ENCODE measurements at regions of chr4 and their contacts with region 1.

Region 1: DNA sequence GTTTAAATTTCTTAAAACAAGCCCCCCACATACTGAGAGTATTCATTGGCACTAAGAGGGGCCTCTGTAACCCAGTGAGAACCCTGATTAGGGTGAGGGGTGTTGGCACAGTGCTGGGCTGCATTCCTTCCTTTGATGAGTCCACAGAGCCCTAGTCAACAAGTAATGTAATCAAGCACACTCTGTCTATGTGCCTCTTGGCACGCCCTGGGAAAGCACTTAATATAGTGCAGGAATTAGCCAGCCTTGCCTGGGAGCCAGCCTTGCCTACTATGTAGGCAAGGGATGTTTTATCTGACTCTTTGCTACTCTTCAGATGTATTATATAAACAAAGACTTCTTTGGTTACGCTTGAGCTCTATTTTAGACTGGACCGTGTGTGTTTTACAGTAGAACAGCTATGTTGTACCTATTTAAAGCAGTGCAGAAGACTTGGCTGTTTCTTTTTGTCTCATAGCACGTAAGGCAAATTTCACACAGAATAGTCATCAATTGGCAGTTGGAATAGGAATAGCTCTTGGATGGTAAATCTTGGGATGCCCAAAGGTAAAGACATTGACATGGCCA is 64.3 kb downstream of the FRAS1 start:
- DNase-seq: no peak
- ATAC-seq: no peak
- H3K4me3 ChIP-seq: no peak overlapping the region
- H3K27ac ChIP-seq: no peak overlapping the region
- H3K4me1 ChIP-seq: no peaks in the 10 kb centered on the region
- H3K27me3 ChIP-seq: no peaks in the 10 kb centered on the region
- CTCF ChIP-seq: no peak
- EP300 ChIP-seq: no peak
- POLR2A ChIP-seq: no peak
- RAD21 ChIP-seq: no peak

Region 2: DNA sequence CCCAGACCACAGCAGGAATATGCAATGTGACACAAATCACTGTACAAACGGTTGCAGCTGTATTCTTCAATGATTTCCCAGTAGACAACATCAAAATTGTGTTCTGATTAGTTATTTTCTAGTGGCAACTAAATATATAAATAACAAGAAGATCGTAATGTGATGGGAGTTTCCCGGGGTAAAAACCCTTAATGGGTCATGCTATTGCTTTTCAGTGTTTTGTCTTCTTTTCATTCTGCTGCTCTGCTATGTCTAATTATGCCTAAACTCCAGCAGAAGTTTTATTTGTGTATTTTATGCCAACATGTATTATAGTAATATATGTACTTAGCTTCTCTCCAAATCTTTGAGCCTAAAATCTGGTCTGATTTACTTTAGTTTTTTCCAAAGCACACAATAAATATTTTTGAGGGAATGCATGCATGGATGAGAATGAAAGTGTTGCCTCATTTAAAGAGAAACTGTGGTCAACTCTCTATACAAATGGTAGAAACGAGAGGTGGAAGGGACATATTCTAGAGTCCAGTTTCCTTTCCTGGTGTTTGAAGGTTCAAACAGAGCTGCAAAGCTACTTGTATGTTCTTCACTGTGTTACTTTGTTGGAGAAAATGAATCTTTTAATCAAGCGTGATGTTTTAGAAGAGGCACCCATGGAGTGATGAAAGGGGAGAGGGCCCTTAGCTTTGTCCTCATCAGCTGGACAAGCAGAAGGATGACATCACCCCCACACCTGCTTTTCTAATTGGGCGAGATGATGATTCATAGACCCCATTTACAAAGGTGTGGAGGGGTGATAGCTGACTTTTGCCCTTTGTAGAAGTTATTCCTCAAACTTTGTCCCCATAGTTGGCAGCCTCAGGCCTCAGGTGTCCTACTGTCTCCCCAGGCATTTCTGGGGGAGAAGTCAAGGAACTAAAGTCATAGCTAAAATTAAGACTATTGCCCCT is 65.4 kb after region 1 on chr4:
- CTCF ChIA-PET with region 1: no interaction called
- POLR2A ChIA-PET with region 1: no interaction called
- RAD21 ChIA-PET with region 1: no interaction called
- SMC1A ChIA-PET with region 1: interaction called, 4 read pairs
- in situ Hi-C with region 1: loop called (anchors 10 kb)
- intact Hi-C with region 1: no loop called
- DNase-seq: no peak
- ATAC-seq: peak; percentile 78
- H3K4me3 ChIP-seq: no peak overlapping the region
- H3K27ac ChIP-seq: no peak overlapping the region
- H3K4me1 ChIP-seq: no peaks in the 10 kb centered on the region
- H3K27me3 ChIP-seq: no peaks in the 10 kb centered on the region
- CTCF ChIP-seq: no peak
- EP300 ChIP-seq: no peak
- POLR2A ChIP-seq: no peak
- RAD21 ChIP-seq: no peak

Measured in GM12878 (cell line).